Endothelial cell of umbilical vein (primary cell): ENCODE measurements at regions of chr9 and their contacts with region 1.

Region 1: GRCh38 chr9:90914868-90915483 is 113.4 kb downstream of the SYK start:
- DNase-seq: peak; percentile 62
- H3K4me3 ChIP-seq: no peak overlapping the region
- H3K27ac ChIP-seq: no peak overlapping the region
- H3K4me1 ChIP-seq: no peaks in the 10 kb centered on the region
- H3K27me3 ChIP-seq: peaks cover 0 to 1% of the 10 kb centered on the region in 2 experiments
- CTCF ChIP-seq: peak; percentile 80 to 89
- POLR2A ChIP-seq: no peak

Region 2: DNA sequence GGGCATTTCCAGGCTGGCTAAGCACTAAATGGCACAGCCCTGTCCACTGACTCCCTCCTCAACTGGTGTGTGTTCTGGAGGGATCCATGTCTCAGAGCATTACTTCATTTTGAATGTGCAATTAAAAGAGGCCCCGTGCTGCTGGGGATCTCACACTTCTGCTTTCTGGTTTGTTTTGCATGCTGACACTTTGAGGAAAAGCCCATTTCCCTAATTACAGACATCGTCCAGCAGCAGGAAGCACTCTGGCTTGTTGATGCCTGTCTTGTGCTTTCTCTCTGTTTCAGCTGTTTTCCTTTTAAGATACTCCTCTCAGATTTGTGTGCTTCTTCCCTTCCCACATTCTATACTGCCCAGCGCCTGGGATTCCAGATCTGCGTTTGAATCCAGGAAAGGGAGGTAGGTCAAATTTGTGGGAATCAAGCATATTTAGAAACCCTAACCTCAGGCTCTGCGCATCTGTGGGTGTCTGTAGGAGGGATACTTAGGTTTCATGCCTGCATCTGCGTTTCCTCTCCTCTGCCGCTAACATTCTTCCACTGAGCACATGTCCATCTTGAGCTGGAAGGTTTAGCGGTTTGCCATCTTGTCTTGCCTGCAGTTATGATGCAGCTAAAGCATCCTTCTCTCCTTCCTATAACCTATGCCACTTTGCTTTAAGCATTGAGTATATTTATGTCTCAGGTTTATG is 87.7 kb before region 1 on chr9:
- CTCF ChIA-PET with region 1: no interaction called
- POLR2A ChIA-PET with region 1: no interaction called
- dilution Hi-C with region 1: no loop called
- intact Hi-C with region 1: no loop called
- DNase-seq: no peak
- H3K4me3 ChIP-seq: no peak overlapping the region
- H3K27ac ChIP-seq: no peak overlapping the region
- H3K4me1 ChIP-seq: no peaks in the 10 kb centered on the region
- H3K27me3 ChIP-seq: no peaks in the 10 kb centered on the region
- CTCF ChIP-seq: no peak
- POLR2A ChIP-seq: no peak

Region 3: GRCh38 chr9:90894986-90895687 is 19.8 kb before region 1 on chr9:
- CTCF ChIA-PET with region 1: interaction called, 12 read pairs
- POLR2A ChIA-PET with region 1: no interaction called
- dilution Hi-C with region 1: no loop called
- intact Hi-C with region 1: no loop called
- DNase-seq: peak; percentile 9
- H3K4me3 ChIP-seq: no peak overlapping the region
- H3K27ac ChIP-seq: no peak overlapping the region
- H3K4me1 ChIP-seq: no peaks in the 10 kb centered on the region
- H3K27me3 ChIP-seq: peaks cover 2 to 8% of the 10 kb centered on the region in 2 experiments
- CTCF ChIP-seq: peak; percentile 29 to 74
- POLR2A ChIP-seq: no peak

Region 4: DNA sequence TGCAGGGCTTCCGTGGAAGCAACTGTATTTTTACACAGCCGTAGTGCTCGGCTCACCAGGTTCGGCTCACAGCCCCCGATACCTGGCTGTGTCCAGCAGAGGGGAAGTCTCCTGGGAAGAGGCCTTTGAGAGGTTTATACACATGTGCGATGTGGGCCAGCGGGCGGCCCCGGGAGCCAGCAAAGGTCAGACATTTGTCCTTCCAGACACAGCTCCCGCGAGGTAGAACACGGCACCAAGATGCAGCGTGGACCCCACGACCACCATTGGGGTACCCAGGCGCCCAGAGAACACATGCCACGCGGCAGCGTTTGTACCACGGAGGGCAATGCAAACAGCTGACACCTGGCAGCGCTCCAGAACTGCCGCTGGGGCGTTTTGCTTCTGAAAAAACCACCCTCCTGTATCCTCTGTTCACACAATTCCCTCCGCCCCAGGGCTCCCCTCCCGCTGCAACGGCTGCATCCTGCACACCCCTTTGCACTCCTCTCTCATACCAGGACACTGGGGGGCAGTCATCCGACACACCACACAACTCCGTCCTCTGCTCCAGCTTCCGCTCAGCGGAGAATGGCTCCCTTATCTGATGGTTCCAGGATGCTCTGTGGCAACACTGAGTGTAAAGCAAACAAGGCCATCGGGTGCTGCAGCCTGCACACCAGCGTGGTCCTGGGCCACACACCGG is 122.0 kb after region 1 on chr9:
- CTCF ChIA-PET with region 1: interaction called, 32 read pairs
- POLR2A ChIA-PET with region 1: no interaction called
- dilution Hi-C with region 1: no loop called
- intact Hi-C with region 1: loop called (anchors 1 kb)
- DNase-seq: peak; percentile 94
- H3K4me3 ChIP-seq: no peak overlapping the region
- H3K27ac ChIP-seq: peak overlapping the region; percentile 89
- H3K4me1 ChIP-seq: peaks cover 17% of the 10 kb centered on the region
- H3K27me3 ChIP-seq: no peaks in the 10 kb centered on the region
- CTCF ChIP-seq: peak; percentile 78 to 83
- POLR2A ChIP-seq: no peak

Region 5: DNA sequence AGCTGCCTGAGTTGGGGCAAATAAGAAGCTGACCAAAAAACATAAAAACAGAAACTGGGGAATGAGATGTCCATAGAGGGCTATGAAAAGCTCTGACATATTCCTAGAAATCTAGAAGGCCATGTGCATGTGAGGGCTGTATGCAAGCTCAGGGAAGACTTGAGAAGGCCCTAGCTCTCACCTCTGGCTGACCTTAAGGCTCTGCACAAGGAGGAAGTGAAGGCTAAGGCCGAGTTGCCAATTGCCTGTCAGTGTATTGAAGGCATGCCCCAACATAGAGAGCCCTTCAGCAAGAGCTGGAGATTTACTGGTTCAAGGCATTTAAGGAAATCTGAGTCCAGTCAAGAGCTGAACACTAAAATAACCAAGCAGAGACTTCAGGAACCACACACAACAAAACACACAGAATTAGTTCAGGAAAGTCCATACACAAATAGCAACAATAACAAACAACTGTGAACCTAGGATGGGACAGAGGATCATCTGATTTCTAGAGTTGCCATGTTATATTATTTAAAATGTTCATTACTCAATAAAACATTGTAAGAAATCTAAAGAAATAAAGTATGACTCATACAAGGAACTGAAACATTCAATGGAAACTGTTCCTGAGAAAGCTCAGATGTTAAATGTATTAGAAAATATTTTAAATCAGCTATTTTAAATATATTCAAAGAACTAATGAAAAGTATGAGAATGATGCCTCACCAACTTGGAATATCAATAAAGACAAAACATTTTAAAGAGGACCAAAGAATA is 284.9 kb after region 1 on chr9:
- CTCF ChIA-PET with region 1: no interaction called
- POLR2A ChIA-PET with region 1: no interaction called
- dilution Hi-C with region 1: no loop called
- intact Hi-C with region 1: no loop called
- DNase-seq: no peak
- H3K4me3 ChIP-seq: no peak overlapping the region
- H3K27ac ChIP-seq: no peak overlapping the region
- H3K4me1 ChIP-seq: no peaks in the 10 kb centered on the region
- H3K27me3 ChIP-seq: no peaks in the 10 kb centered on the region
- CTCF ChIP-seq: no peak
- POLR2A ChIP-seq: no peak

Region 6: GRCh38 chr9:91433180-91433579 is 518.2 kb after region 1 on chr9:
- CTCF ChIA-PET with region 1: interaction called, 139 read pairs
- POLR2A ChIA-PET with region 1: no interaction called
- dilution Hi-C with region 1: no loop called
- intact Hi-C with region 1: loop called (anchors 1 kb)
- DNase-seq: peak; percentile 85
- H3K4me3 ChIP-seq: no peak overlapping the region
- H3K27ac ChIP-seq: no peak overlapping the region
- H3K4me1 ChIP-seq: peaks cover 5% of the 10 kb centered on the region
- H3K27me3 ChIP-seq: peaks cover 2 to 4% of the 10 kb centered on the region in 2 experiments
- CTCF ChIP-seq: peak; percentile 51 to 53
- POLR2A ChIP-seq: no peak

Region 7: DNA sequence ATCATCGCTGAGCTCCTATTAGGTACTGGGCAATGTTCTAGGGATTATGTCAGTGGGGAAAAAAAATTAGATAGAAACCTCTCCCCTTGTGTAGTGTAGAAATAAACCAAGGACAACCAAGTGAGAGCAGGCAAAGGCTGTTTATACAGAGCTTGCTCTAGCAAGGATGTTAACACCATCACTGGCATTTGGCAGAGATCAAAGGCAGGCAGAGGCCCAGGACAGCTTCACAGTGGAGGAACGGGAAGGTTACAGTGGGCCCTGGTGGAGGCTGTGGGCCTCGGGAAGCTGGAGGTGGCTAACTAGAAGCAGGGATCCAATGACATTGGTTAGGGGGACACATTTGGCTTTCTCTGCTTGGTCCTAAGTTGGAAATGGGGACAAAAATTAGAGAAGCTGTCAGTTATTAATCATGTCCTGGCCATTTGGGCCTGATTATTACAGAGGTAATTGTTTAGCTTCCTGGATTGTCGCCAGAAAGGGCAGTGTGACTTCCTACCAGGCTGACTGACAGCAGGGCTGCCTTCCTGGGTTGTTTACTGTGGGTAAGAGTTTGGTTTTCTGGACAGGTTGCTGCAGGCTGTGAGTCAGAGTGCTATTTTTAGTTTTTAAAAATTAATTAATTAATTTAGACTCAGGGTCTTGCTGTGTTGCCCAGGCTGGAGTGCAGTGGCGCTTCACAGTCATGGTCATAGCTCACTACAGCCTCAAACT is 775.7 kb after region 1 on chr9:
- CTCF ChIA-PET with region 1: interaction called, 11 read pairs
- POLR2A ChIA-PET with region 1: no interaction called
- dilution Hi-C with region 1: no loop called
- intact Hi-C with region 1: no loop called
- DNase-seq: peak; percentile 26
- H3K4me3 ChIP-seq: no peak overlapping the region
- H3K27ac ChIP-seq: no peak overlapping the region
- H3K4me1 ChIP-seq: no peaks in the 10 kb centered on the region
- H3K27me3 ChIP-seq: no peaks in the 10 kb centered on the region
- CTCF ChIP-seq: no peak
- POLR2A ChIP-seq: no peak

Region 8: DNA sequence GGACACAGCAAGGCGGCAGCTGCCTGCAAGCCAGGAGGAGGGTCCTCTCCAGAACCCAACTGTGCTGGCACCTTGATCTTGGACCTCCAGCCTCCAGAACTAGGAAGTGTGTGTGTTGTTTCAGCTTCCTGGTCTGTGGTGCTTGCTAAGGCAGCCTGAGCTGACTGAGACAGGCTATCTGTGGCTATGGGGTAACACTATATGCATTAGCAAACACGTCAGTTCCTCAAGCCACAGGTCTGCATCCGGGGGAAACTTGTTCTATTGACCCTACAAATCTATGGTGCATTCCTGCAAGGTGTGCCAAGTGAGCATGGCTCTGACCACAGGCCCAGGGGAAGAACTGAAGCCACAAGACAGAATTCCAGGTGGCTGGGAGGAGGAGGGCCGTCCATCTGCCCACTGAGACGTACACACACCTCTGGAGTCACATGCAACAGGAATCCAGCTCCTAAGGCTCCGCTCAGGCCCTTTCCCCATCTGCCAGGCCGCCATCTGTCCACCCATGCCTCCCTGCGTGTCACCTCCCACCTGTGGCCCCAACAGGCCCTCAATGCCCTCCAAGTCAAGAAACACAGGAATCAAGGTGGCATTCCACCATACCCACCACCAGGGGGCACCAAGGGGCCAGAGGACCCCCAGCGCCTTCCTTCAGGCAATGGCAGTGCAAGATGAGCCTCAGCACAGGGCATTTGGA is 860.2 kb after region 1 on chr9:
- CTCF ChIA-PET with region 1: interaction called, 19 read pairs
- POLR2A ChIA-PET with region 1: no interaction called
- dilution Hi-C with region 1: no loop called
- intact Hi-C with region 1: loop called (anchors 2 kb)
- DNase-seq: peak; percentile 36
- H3K4me3 ChIP-seq: no peak overlapping the region
- H3K27ac ChIP-seq: no peak overlapping the region
- H3K4me1 ChIP-seq: no peaks in the 10 kb centered on the region
- H3K27me3 ChIP-seq: no peaks in the 10 kb centered on the region
- CTCF ChIP-seq: peak; percentile 68 to 92
- POLR2A ChIP-seq: no peak